ENCODE measurements at regions of chr19 and their contacts with region 1.

Region 1: GRCh38 chr19:3075895-3076431 is 13.7 kb upstream of the TLE5 start:
- DNase-seq: peak in 2 of 5 donors; percentile 52 to 79
- ATAC-seq: peak; percentile 24 to 76 (median 73)
- H3K4me3 ChIP-seq: peak overlapping the region in 3 of 12 donors; percentile 15 to 29 (median 29)
- H3K27ac ChIP-seq: no peak overlapping the region
- H3K4me1 ChIP-seq: peaks cover 0 to 14% (median 4%) of the 10 kb centered on the region in 12 donors
- H3K27me3 ChIP-seq: no peaks in the 10 kb centered on the region
- CTCF ChIP-seq: peak; percentile 86 to 95 (median 90)
- POLR2A ChIP-seq: no peak

Region 2: GRCh38 chr19:3108775-3109174 is 32.8 kb after region 1 on chr19:
- intact Hi-C with region 1: loop called in 6 of 10 experiments (anchors 1 to 5 kb)
- DNase-seq: peak in 2 of 5 donors; percentile 61 to 69
- ATAC-seq: peak in 2 of 4 donors; percentile 34 to 50
- H3K4me3 ChIP-seq: no peak overlapping the region
- H3K27ac ChIP-seq: no peak overlapping the region
- H3K4me1 ChIP-seq: peaks cover 1 to 53% (median 19%) of the 10 kb centered on the region in 12 donors
- H3K27me3 ChIP-seq: no peaks in the 10 kb centered on the region
- CTCF ChIP-seq: peak; percentile 69 to 87 (median 78)
- POLR2A ChIP-seq: no peak

Region 3: GRCh38 chr19:3125900-3126524 is 50.0 kb after region 1 on chr19:
- intact Hi-C with region 1: loop called in 4 of 10 experiments (anchors 2 to 10 kb)
- DNase-seq: peak in 4 of 5 donors; percentile 59 to 84 (median 68)
- ATAC-seq: peak in 3 of 4 donors; percentile 67 to 74 (median 70)
- H3K4me3 ChIP-seq: no peak overlapping the region
- H3K27ac ChIP-seq: no peak overlapping the region
- H3K4me1 ChIP-seq: peaks cover 0 to 8% (median 0%) of the 10 kb centered on the region in 12 donors
- H3K27me3 ChIP-seq: no peaks in the 10 kb centered on the region
- CTCF ChIP-seq: peak; percentile 54 to 85 (median 73)
- POLR2A ChIP-seq: no peak

Region 4: GRCh38 chr19:3163230-3163886 is 87.4 kb after region 1 on chr19:
- intact Hi-C with region 1: loop called in 8 of 10 experiments (anchors 2 to 5 kb)
- DNase-seq: peak; percentile 51 to 86 (median 67)
- ATAC-seq: peak; percentile 65 to 91 (median 88)
- H3K4me3 ChIP-seq: no peak overlapping the region
- H3K27ac ChIP-seq: no peak overlapping the region
- H3K4me1 ChIP-seq: peaks cover 0 to 38% (median 0%) of the 10 kb centered on the region in 12 donors
- H3K27me3 ChIP-seq: no peaks in the 10 kb centered on the region
- CTCF ChIP-seq: peak; percentile 87 to 98 (median 94)
- POLR2A ChIP-seq: no peak